ENCODE measurements at regions of chr1 and their contacts with region 1.

Region 1: DNA sequence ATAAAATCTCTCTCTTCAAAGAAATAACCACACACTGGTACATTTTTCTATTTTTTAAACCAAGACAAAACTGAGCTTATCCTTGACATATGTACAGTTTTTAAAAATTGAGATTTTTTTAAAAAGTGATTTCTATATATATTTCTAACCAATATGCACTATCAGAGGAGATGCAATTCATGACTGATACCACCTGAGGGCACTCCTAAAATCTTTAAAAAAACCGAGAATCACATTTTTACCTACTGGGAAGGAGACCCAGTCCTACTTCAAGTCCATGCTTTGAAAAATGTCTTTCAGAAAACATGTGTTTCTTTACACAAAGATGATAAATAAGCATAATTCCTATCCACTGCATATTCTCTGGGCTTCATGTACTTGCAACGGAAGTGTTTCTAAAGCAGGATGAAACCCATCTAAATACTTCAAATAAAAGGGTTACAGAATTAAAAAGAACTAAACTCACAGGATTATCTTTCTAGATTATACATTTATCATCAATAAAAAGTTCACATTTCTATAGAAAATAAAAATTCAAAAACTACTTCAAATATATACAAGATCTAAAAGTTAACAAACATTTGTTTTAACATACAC is 98.6 kb downstream of the ENAH start:
- DNase-seq: peak; percentile 56
- H3K4me3 ChIP-seq: no peak overlapping the region
- H3K27ac ChIP-seq: no peak overlapping the region
- H3K4me1 ChIP-seq: no peaks in the 10 kb centered on the region
- CTCF ChIP-seq: peak; percentile 94

Region 2: DNA sequence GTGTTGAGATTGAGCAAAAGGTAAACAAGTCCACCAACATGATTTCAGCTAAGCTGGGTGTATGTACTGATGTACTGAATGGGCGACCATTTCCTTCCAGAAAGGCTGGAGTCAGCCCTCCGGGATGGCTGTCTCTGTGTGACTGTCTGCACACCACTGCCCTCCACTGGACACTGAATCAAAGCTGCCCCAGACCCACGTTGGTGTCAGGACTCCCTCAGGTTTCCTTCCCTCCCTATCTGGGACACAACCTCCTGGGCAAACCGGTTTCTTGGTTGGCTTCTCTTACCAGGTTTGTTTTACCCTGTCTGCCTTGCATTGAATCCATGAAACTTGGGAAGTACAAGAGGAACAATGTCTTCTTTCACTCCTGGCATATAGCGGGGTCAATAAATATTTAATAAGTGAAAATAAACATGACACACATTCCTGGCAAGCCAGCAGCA is 218.0 kb after region 1 on chr1:
- CTCF ChIA-PET with region 1: no interaction called
- POLR2A ChIA-PET with region 1: interaction called, 3 read pairs
- intact Hi-C with region 1: loop called (anchors 1 kb)
- DNase-seq: peak; percentile 75
- H3K4me3 ChIP-seq: no peak overlapping the region
- H3K27ac ChIP-seq: no peak overlapping the region
- H3K4me1 ChIP-seq: peaks cover 52% of the 10 kb centered on the region
- CTCF ChIP-seq: peak; percentile 88

Measured in OCI-LY7 (cell line).